PC-3 (cell line): ENCODE measurements at regions of chr10 and their contacts with region 1.

Region 1: DNA sequence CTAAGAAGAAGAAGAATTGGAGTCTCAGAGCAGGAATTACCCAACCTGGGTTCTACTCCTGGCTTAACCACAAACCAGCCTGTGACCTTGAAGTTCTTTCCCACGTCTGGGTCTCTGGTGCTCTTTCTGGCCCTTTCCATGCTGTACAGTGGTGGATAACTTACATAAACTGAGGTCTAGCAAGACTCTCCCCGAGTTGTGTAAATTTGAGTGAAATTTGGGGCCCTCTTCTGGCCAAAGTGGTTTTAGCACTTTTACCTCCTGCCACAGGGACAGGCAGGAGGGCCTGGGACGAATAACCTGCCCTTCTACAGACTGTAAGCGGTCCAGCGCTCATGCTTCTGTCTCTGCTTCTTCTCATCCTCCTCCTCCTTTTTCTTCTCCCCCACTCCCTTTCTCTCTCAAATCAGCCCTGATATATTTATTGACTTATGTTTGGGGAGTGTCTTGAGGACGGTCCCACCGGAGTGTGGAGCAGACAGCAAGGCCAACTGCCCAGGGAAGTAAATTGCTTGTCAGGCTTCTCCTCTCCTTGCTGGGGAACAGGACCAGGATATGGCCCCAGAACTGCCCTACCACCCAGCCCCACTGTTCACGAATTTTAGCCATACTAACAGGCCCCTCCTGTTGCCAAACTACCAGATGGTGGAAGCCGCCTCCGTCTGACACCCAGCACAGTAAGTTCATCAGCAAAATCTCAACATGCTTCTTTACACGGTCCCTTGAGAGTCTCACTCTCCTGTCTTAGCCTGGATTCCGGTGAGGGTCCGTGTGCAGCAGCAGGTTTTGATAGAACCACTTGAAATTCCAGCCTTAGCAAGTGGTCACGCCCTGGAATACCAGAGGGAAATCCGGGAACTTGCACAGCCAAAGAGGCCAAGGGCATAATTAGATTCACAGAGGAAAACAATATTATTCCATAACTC is 4.0 kb upstream of the SH3PXD2A start:
- DNase-seq: peak; percentile 75
- ATAC-seq: peak; percentile 61
- H3K4me3 ChIP-seq: no peak overlapping the region
- H3K27ac ChIP-seq: no peak overlapping the region
- H3K4me1 ChIP-seq: peaks cover 20% of the 10 kb centered on the region
- H3K27me3 ChIP-seq: no peaks in the 10 kb centered on the region
- CTCF ChIP-seq: peak; percentile 70

Region 2: GRCh38 chr10:103712570-103713498 is 146.6 kb before region 1 on chr10:
- CTCF ChIA-PET with region 1: interaction called, 3 read pairs
- POLR2A ChIA-PET with region 1: no interaction called
- intact Hi-C with region 1: loop called (anchors 1 kb)
- DNase-seq: peak; percentile 89
- ATAC-seq: peak; percentile 45
- H3K4me3 ChIP-seq: no peak overlapping the region
- H3K27ac ChIP-seq: no peak overlapping the region
- H3K4me1 ChIP-seq: peaks cover 49% of the 10 kb centered on the region
- H3K27me3 ChIP-seq: no peaks in the 10 kb centered on the region
- CTCF ChIP-seq: peak; percentile 86

Region 3: DNA sequence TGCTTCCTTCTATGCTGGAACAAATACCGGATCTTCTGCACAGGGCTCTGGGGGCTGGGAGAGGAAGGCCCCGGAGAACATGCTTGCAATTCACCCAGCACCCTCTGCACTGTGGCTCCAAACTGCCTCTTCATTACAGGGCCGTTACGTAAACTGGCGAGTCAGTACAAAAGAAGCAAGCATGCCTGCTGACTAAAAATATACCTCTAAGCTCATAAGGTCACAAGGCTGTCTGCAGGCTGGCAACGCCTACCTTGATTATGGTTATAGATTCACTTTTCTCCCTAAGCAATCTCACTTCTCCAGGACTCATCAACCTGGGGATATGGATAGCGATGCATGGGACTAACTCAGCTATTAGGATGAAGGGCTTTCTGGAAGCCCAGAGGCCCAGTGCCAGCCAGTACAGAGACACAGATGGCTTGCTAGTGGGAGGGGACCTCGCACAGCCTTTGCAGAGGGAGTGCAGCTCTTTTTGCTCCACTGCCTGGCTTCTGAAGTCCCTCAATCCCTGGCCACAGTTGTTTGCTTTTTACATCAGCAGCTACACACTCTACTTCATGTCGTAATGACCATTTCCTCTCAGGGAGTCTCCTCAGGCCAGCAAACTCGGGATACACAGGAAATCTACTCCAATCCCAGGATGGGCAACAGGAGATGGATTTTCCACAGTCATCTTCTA is 100.2 kb before region 1 on chr10:
- CTCF ChIA-PET with region 1: no interaction called
- POLR2A ChIA-PET with region 1: no interaction called
- intact Hi-C with region 1: loop called (anchors 2 kb)
- DNase-seq: peak; percentile 52
- ATAC-seq: peak; percentile 14
- H3K4me3 ChIP-seq: peak overlapping the region; percentile 7; the same call in 1 of the 2 replicates
- H3K27ac ChIP-seq: peak overlapping the region; percentile 94
- H3K4me1 ChIP-seq: peaks cover 60% of the 10 kb centered on the region
- H3K27me3 ChIP-seq: no peaks in the 10 kb centered on the region
- CTCF ChIP-seq: no peak

Region 4: DNA sequence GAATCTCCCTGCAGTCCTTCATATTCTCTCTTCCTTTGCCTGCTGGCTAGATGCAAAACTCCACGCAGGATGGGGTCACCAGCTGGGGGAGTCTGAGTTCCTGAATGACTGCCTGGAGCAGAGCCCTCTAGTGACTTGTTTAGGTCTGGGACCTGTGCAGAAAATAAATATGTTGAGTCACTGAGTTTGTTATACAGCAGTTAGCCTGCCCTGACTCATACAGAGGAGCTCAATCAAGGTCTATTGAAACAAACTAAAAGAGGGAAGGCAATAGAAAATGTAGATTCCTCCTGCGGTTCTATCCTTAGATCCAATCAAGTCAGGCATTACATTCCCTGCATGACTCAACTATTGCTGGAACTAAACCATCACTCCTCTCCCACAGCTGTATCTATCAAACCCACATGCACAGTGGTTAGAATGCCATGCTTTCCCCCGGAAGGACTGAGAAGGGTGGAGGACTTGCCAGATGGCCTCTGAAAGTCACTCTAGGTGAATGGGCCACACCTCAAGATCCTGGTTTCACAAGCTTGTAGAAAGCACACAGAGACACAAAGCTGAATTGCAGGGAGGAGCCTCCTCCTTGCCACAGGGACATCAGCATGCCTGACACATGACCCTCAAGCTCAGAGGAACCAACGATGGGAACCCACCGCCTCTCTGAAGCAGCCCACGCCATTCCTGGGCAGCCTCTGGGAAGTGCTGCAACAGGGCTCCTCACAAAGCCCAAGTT is 77.9 kb before region 1 on chr10:
- CTCF ChIA-PET with region 1: interaction called, 10 read pairs
- POLR2A ChIA-PET with region 1: no interaction called
- intact Hi-C with region 1: no loop called
- DNase-seq: peak; percentile 89
- ATAC-seq: peak; percentile 89
- H3K4me3 ChIP-seq: no peak overlapping the region
- H3K27ac ChIP-seq: peak overlapping the region; percentile 90
- H3K4me1 ChIP-seq: peaks cover 29% of the 10 kb centered on the region
- H3K27me3 ChIP-seq: no peaks in the 10 kb centered on the region
- CTCF ChIP-seq: peak; percentile 82

Region 5: DNA sequence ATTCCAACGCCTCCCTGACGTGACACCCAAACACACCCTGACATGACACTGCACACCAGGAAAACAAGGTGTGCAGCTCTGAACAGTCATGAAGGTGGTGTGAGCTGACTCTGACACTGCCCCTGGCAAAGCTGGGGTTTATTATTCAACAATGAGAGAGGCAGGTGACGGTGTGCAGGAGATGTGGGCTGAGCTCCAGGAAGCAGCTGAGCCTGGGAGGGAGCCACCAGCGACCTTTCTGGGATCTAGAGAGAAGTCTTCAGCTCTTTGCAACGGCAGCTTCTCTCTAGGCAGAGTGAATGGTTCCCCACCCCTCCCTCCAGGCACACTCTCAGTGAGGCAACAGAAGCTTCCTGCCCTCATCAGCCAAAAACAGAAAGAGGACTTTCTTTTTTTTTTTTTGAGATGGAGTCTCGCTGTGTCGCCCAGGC is 69.6 kb before region 1 on chr10:
- CTCF ChIA-PET with region 1: no interaction called
- POLR2A ChIA-PET with region 1: no interaction called
- intact Hi-C with region 1: loop called (anchors 5 kb)
- DNase-seq: peak; percentile 50
- ATAC-seq: peak; percentile 21
- H3K4me3 ChIP-seq: no peak overlapping the region
- H3K27ac ChIP-seq: no peak overlapping the region
- H3K4me1 ChIP-seq: peaks cover 43% of the 10 kb centered on the region
- H3K27me3 ChIP-seq: no peaks in the 10 kb centered on the region
- CTCF ChIP-seq: no peak